Caco-2 (cell line): ENCODE measurements at regions of chr16 and their contacts with region 1.

Region 1: GRCh38 chr16:51120730-51121347 is 30.2 kb downstream of the SALL1 start:
- DNase-seq: peak in 1 of 2 experiments; percentile 32
- H3K4me3 ChIP-seq: no peak overlapping the region
- H3K4me3 Mint-ChIP-seq: no peak overlapping the region
- H3K27ac Mint-ChIP-seq: no peak overlapping the region
- H3K4me1 ChIP-seq: peaks cover 32% of the 10 kb centered on the region
- H3K4me1 Mint-ChIP-seq: peaks cover 27% of the 10 kb centered on the region
- H3K27me3 ChIP-seq: no peaks in the 10 kb centered on the region
- H3K27me3 Mint-ChIP-seq: no peaks in the 10 kb centered on the region
- CTCF ChIP-seq: no peak

Region 2: DNA sequence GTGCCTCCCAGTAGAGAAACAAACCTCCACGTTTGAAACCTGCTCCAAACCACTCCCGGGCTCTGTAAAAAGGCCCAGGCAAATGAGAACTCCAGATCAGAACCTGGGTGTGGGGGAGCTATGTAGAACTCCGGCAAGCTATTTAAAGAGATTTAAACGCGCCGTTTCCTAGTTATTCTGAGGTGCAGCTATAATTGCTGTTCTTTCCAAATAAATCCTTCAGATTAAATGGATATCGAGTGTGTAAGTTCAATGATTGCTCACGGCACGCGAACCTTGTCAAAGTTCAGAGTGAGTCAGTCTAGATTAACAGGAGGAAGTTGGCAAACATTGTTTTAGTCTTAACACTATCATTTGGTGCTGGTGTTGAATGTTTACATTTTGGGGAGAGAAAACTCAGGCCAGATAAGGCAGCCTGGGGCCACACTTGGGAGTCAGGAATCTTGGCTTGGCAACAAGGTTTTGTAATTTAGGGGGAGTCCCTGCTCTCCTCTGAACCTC is 123.1 kb after region 1 on chr16:
- CTCF ChIA-PET with region 1: no interaction called
- POLR2A ChIA-PET with region 1: no interaction called
- intact Hi-C with region 1: loop called (anchors 1 kb)
- DNase-seq: peak; percentile 55 to 57
- H3K4me3 ChIP-seq: no peak overlapping the region
- H3K4me3 Mint-ChIP-seq: peak overlapping the region; percentile 14
- H3K27ac Mint-ChIP-seq: no peak overlapping the region
- H3K4me1 ChIP-seq: peaks cover 16% of the 10 kb centered on the region
- H3K4me1 Mint-ChIP-seq: peaks cover 21% of the 10 kb centered on the region
- H3K27me3 ChIP-seq: peaks cover 3% of the 10 kb centered on the region
- H3K27me3 Mint-ChIP-seq: peaks cover 44% of the 10 kb centered on the region
- CTCF ChIP-seq: no peak